ENCODE measurements at regions of chr17 and their contacts with region 1.

Region 1: GRCh38 chr17:29357821-29358232 is 32.3 kb upstream of the TAOK1 start:
- DNase-seq: no peak
- H3K4me3 ChIP-seq: no peak overlapping the region
- CTCF ChIP-seq: no peak

Region 2: DNA sequence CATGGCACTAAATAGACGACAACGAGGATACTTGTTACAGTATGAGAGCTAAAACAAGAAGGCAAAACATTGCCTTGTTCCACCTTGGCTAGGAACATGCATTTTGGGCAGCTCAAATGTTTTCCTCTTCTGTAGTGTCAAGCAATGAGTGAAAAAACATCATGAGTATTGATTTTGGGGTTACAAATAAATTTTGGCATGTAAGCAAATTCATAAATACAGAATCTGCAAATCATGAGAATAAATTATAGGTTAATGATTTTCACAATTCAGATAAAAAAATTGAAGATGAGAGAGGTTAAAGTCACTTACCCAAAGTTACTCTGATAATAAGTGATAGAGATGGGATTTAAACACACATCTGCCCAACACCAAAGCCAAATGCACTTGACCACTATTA is 35.5 kb before region 1 on chr17:
- in situ Hi-C with region 1: loop called (anchors 5 kb)
- DNase-seq: no peak
- H3K4me3 ChIP-seq: no peak overlapping the region
- CTCF ChIP-seq: no peak

Region 3: DNA sequence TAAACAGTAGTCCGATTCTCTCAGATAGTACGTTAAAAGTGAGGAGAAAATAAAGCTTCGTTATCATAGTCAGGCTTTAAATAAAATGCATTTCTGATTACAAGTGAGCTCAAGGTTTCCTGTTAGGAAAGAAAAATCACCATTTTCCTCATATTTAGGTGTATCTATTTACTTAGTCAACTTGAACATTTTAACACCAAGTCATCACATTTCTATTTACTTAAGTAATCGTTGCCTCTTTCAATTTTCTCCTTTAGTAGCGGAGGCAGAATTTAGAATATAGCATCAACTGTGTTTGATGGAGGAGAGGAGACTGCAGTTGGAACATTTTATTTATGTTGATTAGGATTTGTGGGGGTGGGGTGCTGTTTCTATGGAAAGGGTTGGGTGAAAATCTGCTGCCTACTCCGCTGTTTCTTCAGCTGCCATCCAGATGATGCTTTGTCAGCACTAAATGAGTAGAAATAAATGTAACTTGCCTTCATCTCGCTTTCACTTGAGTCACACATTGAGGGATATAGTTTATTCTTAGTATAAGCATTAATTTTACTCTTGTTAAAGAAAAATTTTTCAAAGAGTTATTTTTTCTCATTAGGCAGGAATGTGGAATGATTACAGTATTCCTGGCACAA is 166.7 kb after region 1 on chr17:
- in situ Hi-C with region 1: loop called (anchors 10 kb)
- DNase-seq: no peak
- H3K4me3 ChIP-seq: no peak overlapping the region
- CTCF ChIP-seq: no peak